ENCODE measurements at regions of chr1 and their contacts with region 1.

Region 1: DNA sequence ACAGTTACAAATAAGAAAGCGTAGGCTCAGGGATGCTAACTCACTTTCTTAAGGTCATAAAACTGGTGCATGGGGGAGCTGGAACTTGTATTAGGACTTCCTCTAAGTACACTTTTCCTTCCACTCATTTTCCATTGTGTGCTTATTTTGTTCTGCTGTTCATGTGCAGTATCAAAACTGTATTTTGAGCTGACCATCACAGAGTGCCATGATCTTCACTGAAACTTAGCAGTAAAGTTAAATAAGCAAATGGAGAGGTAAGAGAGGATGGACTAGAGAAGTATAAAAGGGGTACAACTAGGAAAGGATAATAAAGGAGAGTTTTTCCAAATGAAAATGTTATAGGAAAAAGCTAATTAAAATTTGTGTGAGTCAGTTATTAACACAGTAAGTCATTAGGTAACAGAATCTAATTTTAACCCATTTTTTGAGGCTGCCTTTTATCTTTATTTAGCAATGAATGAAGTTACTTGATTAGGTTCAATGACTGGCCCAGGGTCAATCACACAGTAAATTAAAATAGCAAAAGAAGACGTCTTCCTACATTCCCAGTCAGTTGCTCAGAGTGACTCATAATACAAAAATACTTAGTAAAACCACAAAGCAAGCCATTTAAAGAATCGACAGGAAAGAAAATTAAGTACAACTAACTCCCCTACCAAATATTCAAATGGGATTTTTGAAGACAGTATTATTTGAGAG is 165.8 kb upstream of the C1orf105 start:
- DNase-seq: peak; percentile 72
- H3K4me3 ChIP-seq: no peak overlapping the region
- H3K27ac ChIP-seq: peak overlapping the region; percentile 99
- H3K4me1 ChIP-seq: peaks cover 20% of the 10 kb centered on the region
- H3K27me3 ChIP-seq: no peaks in the 10 kb centered on the region
- CTCF ChIP-seq: no peak
- POLR2A ChIP-seq: no peak

Region 2: DNA sequence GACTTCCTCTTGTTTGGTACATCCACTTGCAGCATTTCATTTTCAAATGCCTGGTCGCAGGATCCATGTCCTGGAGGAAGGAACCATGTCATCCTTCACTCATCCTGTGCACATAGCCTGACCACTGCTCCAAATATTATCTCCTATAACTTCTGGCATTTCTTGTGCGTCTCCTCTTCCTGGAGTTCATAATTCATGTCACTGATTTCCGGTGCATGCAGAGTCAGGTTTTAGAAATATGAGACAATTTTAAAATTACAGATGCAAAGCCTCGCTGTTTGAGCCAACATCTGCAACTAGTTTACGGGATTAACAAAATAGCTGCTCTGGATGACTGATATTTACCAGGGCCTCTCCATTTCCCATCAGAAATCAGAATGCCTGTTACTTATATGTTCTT is 145.3 kb before region 1 on chr1:
- CTCF ChIA-PET with region 1: no interaction called
- POLR2A ChIA-PET with region 1: no interaction called
- dilution Hi-C with region 1: no loop called
- intact Hi-C with region 1: loop called (anchors 2 kb)
- DNase-seq: peak; percentile 66
- H3K4me3 ChIP-seq: no peak overlapping the region
- H3K27ac ChIP-seq: peak overlapping the region; percentile 28
- H3K4me1 ChIP-seq: peaks cover 48% of the 10 kb centered on the region
- H3K27me3 ChIP-seq: no peaks in the 10 kb centered on the region
- CTCF ChIP-seq: no peak
- POLR2A ChIP-seq: no peak

Region 3: DNA sequence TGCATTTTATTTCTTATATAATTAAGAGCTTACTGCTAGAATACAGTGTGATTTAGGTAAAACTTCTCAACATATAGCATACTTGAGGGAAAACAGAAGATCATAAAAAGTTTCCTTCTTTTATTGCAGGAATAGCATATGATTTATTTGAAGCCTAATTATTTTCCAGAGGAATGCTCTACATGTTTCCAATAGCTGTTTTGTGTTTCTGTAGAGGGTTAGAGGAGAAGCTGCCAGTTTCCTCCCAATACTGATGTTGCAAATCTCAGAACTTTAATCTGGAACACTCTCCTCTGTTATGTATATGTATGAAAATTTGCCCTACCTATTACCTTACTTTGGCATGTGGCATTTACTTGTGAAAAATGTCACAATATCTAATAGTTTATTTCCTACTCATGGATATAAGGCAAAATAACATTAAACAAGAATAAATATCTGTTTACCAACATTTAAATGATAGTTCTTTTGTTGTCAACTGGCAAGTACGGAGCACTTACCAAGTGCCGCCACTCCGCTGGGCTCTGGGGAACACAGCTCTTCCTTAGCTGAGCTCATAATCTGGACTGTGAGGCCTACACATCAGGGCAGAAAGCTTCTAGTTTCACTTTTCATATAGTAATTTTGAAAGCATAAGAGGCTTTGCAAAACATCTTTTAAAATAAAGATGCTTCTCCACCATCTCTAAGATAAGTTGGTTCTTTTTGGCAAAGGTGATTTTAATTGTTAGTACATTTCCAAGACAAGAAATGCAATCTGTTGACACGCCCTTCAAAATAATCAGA is 74.0 kb before region 1 on chr1:
- CTCF ChIA-PET with region 1: no interaction called
- POLR2A ChIA-PET with region 1: no interaction called
- dilution Hi-C with region 1: no loop called
- intact Hi-C with region 1: loop called (anchors 1 kb)
- DNase-seq: peak; percentile 75
- H3K4me3 ChIP-seq: peak overlapping the region in 1 of 3 experiments; percentile 58
- H3K27ac ChIP-seq: peak overlapping the region; percentile 46
- H3K4me1 ChIP-seq: peaks cover 11% of the 10 kb centered on the region
- H3K27me3 ChIP-seq: no peaks in the 10 kb centered on the region
- CTCF ChIP-seq: no peak
- POLR2A ChIP-seq: no peak

Region 4: GRCh38 chr1:172269644-172270043 is 15.0 kb after region 1 on chr1:
- CTCF ChIA-PET with region 1: interaction called, 10 read pairs
- POLR2A ChIA-PET with region 1: no interaction called
- dilution Hi-C with region 1: no loop called
- intact Hi-C with region 1: no loop called
- DNase-seq: no peak
- H3K4me3 ChIP-seq: no peak overlapping the region
- H3K27ac ChIP-seq: no peak overlapping the region
- H3K4me1 ChIP-seq: no peaks in the 10 kb centered on the region
- H3K27me3 ChIP-seq: no peaks in the 10 kb centered on the region
- CTCF ChIP-seq: no peak
- POLR2A ChIP-seq: no peak